ENCODE measurements at regions of chr21 and their contacts with region 1.

Region 1: GRCh38 chr21:29018540-29018939 is 609 bp downstream of the RWDD2B start:
- DNase-seq: no peak
- H3K4me3 ChIP-seq: peak overlapping the region; percentile 89
- H3K4me3 Mint-ChIP-seq: peak overlapping the region; percentile 76
- H3K27ac Mint-ChIP-seq: peak overlapping the region; percentile 88
- H3K4me1 ChIP-seq: peaks cover 9% of the 10 kb centered on the region
- H3K4me1 Mint-ChIP-seq: peaks cover 17% of the 10 kb centered on the region
- H3K27me3 ChIP-seq: no peaks in the 10 kb centered on the region
- H3K27me3 Mint-ChIP-seq: no peaks in the 10 kb centered on the region
- CTCF ChIP-seq: no peak

Region 2: GRCh38 chr21:29002442-29003144 is 15.9 kb before region 1 on chr21:
- CTCF ChIA-PET with region 1: interaction called, 4 read pairs
- POLR2A ChIA-PET with region 1: interaction called, 47 read pairs
- intact Hi-C with region 1: loop called (anchors 1 kb)
- DNase-seq: peak; percentile 93 to 96
- H3K4me3 ChIP-seq: peak overlapping the region; percentile 52
- H3K4me3 Mint-ChIP-seq: peak overlapping the region; percentile 88
- H3K27ac Mint-ChIP-seq: peak overlapping the region; percentile 91
- H3K4me1 ChIP-seq: no peaks in the 10 kb centered on the region
- H3K4me1 Mint-ChIP-seq: no peaks in the 10 kb centered on the region
- H3K27me3 ChIP-seq: no peaks in the 10 kb centered on the region
- H3K27me3 Mint-ChIP-seq: no peaks in the 10 kb centered on the region
- CTCF ChIP-seq: no peak